Aorta (tissue), 5 donors: ENCODE measurements at regions of chr1 and their contacts with region 1.

Region 1: DNA sequence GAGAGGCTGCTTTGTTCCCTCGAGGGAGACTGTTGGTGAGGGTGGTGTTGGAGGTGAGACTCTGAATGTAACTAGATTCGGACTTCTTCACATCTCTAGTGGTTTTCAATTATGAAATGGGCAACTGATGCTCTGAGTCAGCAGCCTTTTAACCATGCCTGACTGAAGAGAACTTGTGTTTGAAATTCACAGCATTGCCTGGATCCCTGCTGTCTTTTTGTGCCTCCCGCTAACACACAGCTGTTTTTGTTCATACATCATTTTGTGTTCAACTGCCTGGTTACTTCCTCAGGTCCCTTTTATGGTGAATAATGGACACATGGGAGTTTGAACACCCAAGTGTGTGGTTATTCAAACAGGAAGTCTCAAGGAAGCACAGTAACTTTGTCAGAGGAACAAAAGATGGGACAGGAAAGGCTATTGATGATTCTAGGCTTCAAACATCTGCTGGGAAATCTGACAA is 16.8 kb downstream of the LAMC1 start:
- DNase-seq: no peak
- ATAC-seq: no peak
- H3K4me3 ChIP-seq: no peak overlapping the region
- H3K27ac ChIP-seq: peak overlapping the region in 1 of 2 donors; percentile 14
- H3K4me1 ChIP-seq: peaks cover 3 to 17% of the 10 kb centered on the region in 2 donors
- H3K27me3 ChIP-seq: no peaks in the 10 kb centered on the region

Region 2: DNA sequence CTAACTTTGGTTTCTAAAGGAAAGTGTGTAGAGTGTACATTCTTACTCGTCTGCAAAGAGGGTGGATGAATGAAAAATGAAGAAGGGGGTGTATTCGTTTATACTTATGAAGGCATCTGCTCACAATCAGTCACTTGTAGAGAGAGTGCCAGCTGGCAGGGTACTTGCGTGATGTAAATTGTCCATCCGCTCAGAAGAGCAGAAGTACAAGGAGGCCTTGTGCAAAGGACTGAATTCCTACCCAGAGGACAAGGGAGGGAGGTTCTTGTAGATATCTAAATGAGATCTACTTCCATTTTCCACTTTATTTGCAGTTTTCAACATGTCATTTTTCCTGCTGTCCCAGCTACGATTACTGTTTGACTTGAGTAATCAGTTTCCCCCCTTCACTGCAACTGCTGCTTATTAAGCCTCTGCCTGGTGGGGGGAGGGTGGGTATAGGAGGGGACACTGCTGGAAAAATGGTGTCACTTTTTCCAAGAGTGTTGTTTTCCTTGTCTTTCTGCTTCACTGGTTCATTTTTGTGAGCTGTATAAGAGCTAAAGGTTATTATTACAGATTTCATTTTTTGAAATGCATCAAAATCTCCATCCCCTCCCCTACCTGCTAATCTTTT is 50.5 kb after region 1 on chr1:
- intact Hi-C with region 1: loop called in 1 of 2 experiments (anchors 5 kb)
- DNase-seq: peak in 1 of 2 donors; percentile 50
- ATAC-seq: peak; percentile 46
- H3K4me3 ChIP-seq: no peak overlapping the region
- H3K27ac ChIP-seq: no peak overlapping the region
- H3K4me1 ChIP-seq: peaks cover 4 to 19% of the 10 kb centered on the region in 2 donors
- H3K27me3 ChIP-seq: no peaks in the 10 kb centered on the region